Naive thymus-derived CD4-positive, alpha-beta T cell (primary cell): ENCODE measurements at regions of chr2 and their contacts with region 1.

Region 1: GRCh38 chr2:172427256-172427989 is at the start of gene ITGA6:
- DNase-seq: peak; percentile 55 to 84 (median 80)
- ATAC-seq: peak; percentile 81
- H3K4me3 ChIP-seq: peak within 1 kb of the TSS; percentile 76
- H3K4me3 Mint-ChIP-seq: peak within 1 kb of the TSS in 7 of 10 donors; percentile 92 to 100 (median 98)
- H3K27ac ChIP-seq: peak within 1 kb of the TSS; percentile 76
- H3K27ac Mint-ChIP-seq: peak within 1 kb of the TSS in 8 of 9 donors; percentile 90 to 96 (median 95)
- H3K4me1 ChIP-seq: peaks cover 17 to 44% of the 10 kb centered on the region in 2 donors
- H3K4me1 Mint-ChIP-seq: peaks cover 21 to 65% (median 46%) of the 10 kb centered on the region in 7 donors
- H3K27me3 ChIP-seq: no peaks in the 10 kb centered on the region
- H3K27me3 Mint-ChIP-seq: peaks cover 0 to 82% (median 0%) of the 10 kb centered on the region in 5 donors
- total RNA-seq, gene ITGA6: 13.1 to 179 (median 135) TPM

Region 2: DNA sequence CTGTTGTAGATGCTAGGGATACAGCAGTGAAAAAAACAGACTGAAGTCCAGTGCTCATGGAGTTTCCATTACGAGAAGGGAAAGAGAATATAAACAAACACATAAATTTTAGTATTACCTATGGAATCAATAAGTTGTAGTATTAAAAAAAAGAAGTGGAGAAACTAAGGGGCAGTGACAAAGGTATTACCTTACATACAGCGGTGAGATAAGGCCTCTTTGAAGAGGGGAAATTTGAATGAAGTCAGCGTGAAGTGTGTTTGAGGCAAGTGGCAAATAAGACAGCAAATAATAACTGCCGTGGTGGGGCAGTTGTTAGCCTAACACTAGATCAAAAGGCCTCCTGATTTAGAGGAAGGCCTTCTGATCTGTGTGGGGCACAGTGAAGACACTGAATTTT is 1324.6 kb before region 1 on chr2:
- CTCF ChIA-PET with region 1: no interaction called
- POLR2A ChIA-PET with region 1: no interaction called
- intact Hi-C with region 1: no loop called
- DNase-seq: peak in 1 of 9 donors; percentile 27
- ATAC-seq: peak; percentile 48
- H3K4me3 ChIP-seq: no peak overlapping the region
- H3K4me3 Mint-ChIP-seq: peak overlapping the region in 7 of 10 donors; percentile 3 to 46 (median 40)
- H3K27ac ChIP-seq: no peak overlapping the region
- H3K27ac Mint-ChIP-seq: peak overlapping the region in 8 of 9 donors; percentile 42 to 84 (median 61)
- H3K4me1 ChIP-seq: peaks cover 0 to 7% of the 10 kb centered on the region in 2 donors
- H3K4me1 Mint-ChIP-seq: peaks cover 14 to 72% (median 56%) of the 10 kb centered on the region in 7 donors
- H3K27me3 ChIP-seq: no peaks in the 10 kb centered on the region
- H3K27me3 Mint-ChIP-seq: no peaks in the 10 kb centered on the region

Region 3: DNA sequence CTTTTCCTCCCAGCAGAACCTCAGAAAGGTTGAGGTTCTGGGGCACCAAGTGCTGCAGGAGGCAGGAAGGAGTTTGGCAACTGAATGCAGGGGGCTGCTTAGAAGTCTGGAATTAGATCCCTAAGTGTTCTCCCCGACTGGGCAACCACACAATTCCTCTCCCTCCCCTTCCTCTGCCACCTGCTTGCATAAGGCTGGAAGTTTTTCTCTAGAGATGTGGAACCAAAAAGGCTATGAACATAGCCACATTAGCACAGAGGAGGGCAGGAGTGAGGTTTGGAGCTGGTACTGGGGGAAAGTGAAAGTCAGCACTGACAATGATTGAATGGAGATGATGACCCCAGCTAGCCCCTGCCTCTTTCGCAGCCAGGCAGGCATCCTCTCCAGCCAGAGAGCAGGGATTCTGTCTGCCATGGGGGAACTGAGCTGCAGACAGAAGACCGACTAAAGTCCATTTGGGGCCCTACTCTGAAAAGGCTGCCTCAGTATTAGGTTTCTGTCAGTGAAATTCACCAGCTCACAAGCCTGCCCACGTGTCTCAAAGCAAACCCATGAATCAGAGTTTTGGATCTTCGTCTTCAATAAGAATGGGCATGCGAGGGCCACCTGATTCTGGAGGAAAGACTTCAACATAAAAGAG is 87.9 kb before region 1 on chr2:
- CTCF ChIA-PET with region 1: no interaction called
- POLR2A ChIA-PET with region 1: interaction called, 4 read pairs
- intact Hi-C with region 1: loop called in 1 of 2 experiments (anchors 1 kb)
- DNase-seq: peak in 5 of 9 donors; percentile 14 to 33 (median 22)
- ATAC-seq: peak; percentile 63
- H3K4me3 ChIP-seq: peak overlapping the region; percentile 41
- H3K4me3 Mint-ChIP-seq: peak overlapping the region; percentile 66 to 85 (median 79)
- H3K27ac ChIP-seq: no peak overlapping the region
- H3K27ac Mint-ChIP-seq: peak overlapping the region in 8 of 9 donors; percentile 39 to 83 (median 76)
- H3K4me1 ChIP-seq: peaks cover 4 to 15% of the 10 kb centered on the region in 2 donors
- H3K4me1 Mint-ChIP-seq: peaks cover 15 to 45% (median 32%) of the 10 kb centered on the region in 7 donors
- H3K27me3 ChIP-seq: peaks cover 0 to 2% of the 10 kb centered on the region in 2 donors
- H3K27me3 Mint-ChIP-seq: peaks cover 0 to 2% (median 0%) of the 10 kb centered on the region in 5 donors

Region 4: DNA sequence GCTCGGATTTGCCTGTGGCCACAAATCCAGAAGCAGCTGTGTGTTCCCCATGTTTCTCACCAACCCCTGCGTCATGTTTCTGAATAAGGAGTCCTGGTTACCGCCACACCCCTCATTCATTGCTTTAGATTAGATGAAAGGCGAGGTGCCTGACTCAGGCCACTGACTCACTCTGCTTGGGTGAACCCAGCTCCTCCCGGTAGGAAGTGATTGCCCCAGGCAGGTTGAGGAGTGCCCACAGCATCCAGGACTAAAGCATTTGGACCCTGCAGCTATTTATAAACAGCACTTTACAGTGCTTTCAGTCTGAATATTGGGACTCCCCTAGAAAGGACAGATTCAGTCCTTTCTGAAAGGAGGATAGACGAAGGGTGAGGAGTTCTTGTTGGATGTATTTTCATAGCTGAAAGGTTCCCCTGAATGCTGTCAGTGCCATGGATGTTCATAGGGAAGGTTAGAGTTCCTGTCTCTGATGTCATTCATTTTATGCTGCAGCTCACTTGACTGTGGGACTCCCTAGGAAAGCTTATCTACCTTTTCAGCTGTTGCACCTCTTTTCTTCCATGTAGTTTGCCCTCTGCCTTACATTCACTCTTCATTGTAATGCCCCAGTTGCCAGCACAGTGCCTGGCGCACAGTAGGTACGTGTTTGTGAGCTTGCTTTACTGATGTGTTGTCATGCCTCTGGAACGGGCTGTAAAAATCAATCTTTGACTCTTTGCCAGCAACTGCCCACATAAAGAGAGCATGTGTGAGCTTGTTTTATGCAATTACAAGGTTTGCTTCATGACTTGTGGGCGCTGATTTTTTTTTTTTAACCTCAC is 14.9 kb after region 1 on chr2:
- CTCF ChIA-PET with region 1: interaction called, 115 read pairs
- POLR2A ChIA-PET with region 1: interaction called, 862 read pairs
- intact Hi-C with region 1: loop called (anchors 1 kb)
- DNase-seq: peak in 3 of 9 donors; percentile 42 to 63 (median 46)
- ATAC-seq: peak; percentile 47
- H3K4me3 ChIP-seq: peak overlapping the region; percentile 46
- H3K4me3 Mint-ChIP-seq: peak overlapping the region in 9 of 10 donors; percentile 59 to 95 (median 91)
- H3K27ac ChIP-seq: peak overlapping the region; percentile 41
- H3K27ac Mint-ChIP-seq: peak overlapping the region in 8 of 9 donors; percentile 37 to 97 (median 90)
- H3K4me1 ChIP-seq: peaks cover 59 to 80% of the 10 kb centered on the region in 2 donors
- H3K4me1 Mint-ChIP-seq: peaks cover 33 to 79% (median 72%) of the 10 kb centered on the region in 7 donors
- H3K27me3 ChIP-seq: no peaks in the 10 kb centered on the region
- H3K27me3 Mint-ChIP-seq: peaks cover 0 to 31% (median 0%) of the 10 kb centered on the region in 5 donors